AG04449 (cell line): ENCODE measurements at regions of chr7 and their contacts with region 1.

Region 1: DNA sequence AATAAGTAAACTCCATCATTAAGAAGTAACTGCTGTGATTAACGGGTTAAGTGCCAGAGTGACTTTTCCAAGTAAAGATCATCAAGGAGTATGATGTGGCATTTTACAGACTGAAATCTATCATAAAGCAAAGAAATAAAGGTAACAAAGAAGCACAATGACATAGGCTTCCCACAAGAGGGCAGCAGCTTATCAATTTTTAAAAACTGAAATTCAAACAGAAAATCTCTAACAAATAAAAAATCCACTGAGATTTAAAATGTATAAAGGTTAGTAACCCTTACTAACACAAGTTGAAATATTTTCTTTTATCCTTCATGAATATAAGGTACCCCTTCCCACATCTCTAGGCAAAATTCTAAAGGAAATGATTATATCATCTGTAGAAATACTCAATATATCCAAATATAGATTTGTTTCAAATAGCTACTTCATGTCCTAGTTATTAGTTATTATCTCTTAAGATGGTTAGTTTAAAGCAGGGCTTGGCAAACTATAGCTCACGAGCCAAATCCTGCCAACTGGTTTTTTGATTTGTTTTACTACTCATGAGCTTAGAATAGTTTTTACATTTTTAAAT is 29.2 kb downstream of the FAM3C start:
- DNase-seq: no peak
- H3K4me3 ChIP-seq: no peak overlapping the region
- CTCF ChIP-seq: peak; percentile 37

Region 2: DNA sequence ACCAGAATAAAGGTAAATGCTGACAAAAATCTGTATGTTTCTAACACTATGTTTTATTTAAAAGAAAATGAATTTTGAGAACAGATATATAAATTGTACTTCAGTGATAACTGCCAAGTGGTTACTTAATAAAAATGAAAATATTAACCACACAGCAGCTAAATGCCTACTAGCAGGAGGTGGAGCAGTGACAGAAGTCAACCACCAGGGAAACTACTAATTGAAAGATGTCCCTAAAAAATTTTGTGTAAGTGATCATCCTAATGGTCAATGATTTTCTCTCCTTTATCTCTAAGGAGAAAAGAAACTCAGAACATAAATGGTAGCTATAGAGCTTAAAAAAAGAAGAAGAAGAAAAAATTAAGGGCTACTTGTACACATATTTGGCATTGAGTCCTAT is 15.3 kb before region 1 on chr7:
- CTCF ChIA-PET with region 1: interaction called, 22 read pairs
- POLR2A ChIA-PET with region 1: interaction called, 3 read pairs
- DNase-seq: no peak
- H3K4me3 ChIP-seq: no peak overlapping the region
- CTCF ChIP-seq: no peak

Region 3: GRCh38 chr7:121385800-121386179 is 18.8 kb after region 1 on chr7:
- CTCF ChIA-PET with region 1: interaction called, 31 read pairs
- POLR2A ChIA-PET with region 1: no interaction called
- DNase-seq: no peak
- H3K4me3 ChIP-seq: no peak overlapping the region
- CTCF ChIP-seq: no peak

Region 4: GRCh38 chr7:121547544-121548092 is 180.7 kb after region 1 on chr7:
- CTCF ChIA-PET with region 1: interaction called, 226 read pairs
- POLR2A ChIA-PET with region 1: no interaction called
- DNase-seq: no peak
- H3K4me3 ChIP-seq: no peak overlapping the region
- CTCF ChIP-seq: peak; percentile 59

Region 5: DNA sequence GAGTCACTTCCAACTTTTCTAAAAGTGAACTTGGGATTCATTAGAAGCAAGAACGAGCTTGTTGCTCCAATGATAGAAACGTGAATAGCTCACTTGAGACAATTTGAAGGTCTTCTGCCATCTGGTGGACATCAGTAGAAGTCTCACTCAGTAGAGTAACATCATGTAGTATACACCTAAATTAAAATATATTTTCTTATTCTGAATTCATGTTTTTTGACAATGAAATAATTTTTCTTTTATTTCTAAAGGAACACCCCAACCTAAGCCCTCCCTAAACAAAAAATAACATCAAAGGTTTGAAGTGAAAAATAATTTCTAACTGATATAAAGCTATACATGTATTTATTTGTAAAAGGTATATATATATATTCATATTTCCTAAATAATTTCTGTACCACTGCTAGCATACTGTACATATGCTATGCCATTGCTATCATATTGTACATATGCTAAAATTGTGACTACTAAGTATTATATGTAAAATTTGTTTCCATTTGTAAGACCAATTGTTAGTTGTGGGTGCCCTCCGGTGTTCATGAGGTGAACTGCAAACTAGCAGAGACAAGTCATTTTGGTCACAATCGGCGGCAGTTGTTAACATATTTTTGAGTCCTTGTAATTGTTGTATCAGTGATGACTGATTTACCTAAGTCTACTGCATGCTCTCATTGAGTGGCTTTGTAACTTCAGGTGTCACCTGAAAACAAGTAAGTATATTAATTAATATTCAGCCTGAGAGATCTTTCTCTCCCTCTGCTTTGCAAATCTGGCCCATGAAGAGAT is 627.9 kb after region 1 on chr7:
- CTCF ChIA-PET with region 1: interaction called, 38 read pairs
- POLR2A ChIA-PET with region 1: no interaction called
- DNase-seq: peak; percentile 47
- H3K4me3 ChIP-seq: no peak overlapping the region
- CTCF ChIP-seq: peak; percentile 79